HEK293 (cell line): ENCODE measurements at regions of chrX and their contacts with region 1.

Region 1: DNA sequence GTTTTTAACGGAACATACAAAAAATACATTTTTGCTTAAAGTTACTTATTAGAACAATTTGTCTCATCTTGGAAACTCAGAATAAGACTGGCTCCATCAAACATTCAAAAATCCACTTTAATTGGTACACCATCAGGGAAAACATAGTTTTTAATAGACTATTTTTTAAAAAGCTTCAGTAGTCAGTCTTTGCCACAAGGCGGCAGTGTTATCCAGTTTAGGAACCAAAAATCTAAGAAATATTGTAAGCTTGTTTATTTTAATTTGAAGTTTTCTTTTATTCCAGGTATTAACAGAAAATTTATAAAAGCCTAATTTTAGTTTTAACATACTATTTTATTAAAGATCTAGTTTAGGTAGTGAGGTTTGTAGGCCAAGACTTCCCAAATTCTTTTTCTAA is 107.7 kb downstream of the APOOL start:
- H3K4me3 ChIP-seq: no peak overlapping the region
- H3K27ac ChIP-seq: no peak overlapping the region
- H3K4me1 ChIP-seq: no peaks in the 10 kb centered on the region
- CTCF ChIP-seq: no peak

Region 2: GRCh38 chrX:84830836-84831235 is 280.5 kb before region 1 on chrX:
- CTCF ChIA-PET with region 1: no interaction called
- POLR2A ChIA-PET with region 1: no interaction called
- H3K4me3 ChIP-seq: no peak overlapping the region
- H3K27ac ChIP-seq: no peak overlapping the region
- H3K4me1 ChIP-seq: no peaks in the 10 kb centered on the region
- CTCF ChIP-seq: no peak

Region 3: DNA sequence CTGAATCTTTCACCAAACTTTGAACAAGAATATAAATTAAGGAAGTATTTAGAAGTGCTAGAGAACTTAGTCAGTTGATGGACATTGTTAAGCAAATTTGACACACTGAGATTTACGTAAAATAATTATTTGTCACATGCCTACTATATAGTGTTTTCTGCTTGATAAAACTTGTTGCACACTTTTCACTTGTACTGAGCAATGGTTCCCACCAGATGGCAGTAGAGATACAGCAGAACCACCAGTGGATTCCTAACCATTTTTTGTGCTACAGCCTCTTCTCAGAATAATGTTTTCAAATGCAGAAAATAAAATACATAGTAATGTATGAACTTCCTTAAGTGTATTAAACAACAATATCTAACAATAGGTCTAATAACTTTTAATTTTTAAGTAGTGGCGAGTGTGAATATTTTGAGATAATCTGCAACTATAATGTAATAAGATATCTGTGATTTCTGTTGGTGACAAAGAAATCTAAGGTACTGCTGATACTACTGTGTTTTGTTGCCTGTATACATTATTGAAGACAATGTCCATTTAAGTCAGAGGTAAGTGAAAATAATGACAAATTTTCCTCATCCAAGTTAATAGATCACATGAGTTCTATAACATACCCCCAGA is 26.5 kb before region 1 on chrX:
- CTCF ChIA-PET with region 1: interaction called, 39 read pairs
- POLR2A ChIA-PET with region 1: no interaction called
- H3K4me3 ChIP-seq: no peak overlapping the region
- H3K27ac ChIP-seq: no peak overlapping the region
- H3K4me1 ChIP-seq: no peaks in the 10 kb centered on the region
- CTCF ChIP-seq: peak; percentile 69; the same call in 1 of the 2 replicates

Region 4: DNA sequence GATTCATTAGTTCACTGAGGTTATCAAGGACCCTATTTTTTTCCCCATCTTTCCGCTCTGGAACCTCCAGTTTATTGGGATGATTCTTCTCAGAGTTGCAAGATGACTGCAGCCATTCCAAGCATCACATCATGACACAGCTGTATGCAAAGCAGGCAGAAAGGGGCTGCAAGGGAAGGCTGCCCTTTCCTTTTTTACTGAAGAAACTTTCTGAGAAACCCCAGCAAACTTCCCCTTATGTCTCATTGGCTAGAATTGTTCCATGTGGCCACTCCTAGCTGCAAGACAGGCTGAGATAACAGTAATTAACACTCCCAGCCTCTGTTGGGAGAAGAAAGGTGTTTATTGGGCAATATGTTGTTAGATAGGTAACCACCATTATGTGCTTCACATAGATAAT is 29.6 kb after region 1 on chrX:
- CTCF ChIA-PET with region 1: interaction called, 13 read pairs
- POLR2A ChIA-PET with region 1: no interaction called
- H3K4me3 ChIP-seq: no peak overlapping the region
- H3K27ac ChIP-seq: no peak overlapping the region
- H3K4me1 ChIP-seq: no peaks in the 10 kb centered on the region
- CTCF ChIP-seq: no peak

Region 5: DNA sequence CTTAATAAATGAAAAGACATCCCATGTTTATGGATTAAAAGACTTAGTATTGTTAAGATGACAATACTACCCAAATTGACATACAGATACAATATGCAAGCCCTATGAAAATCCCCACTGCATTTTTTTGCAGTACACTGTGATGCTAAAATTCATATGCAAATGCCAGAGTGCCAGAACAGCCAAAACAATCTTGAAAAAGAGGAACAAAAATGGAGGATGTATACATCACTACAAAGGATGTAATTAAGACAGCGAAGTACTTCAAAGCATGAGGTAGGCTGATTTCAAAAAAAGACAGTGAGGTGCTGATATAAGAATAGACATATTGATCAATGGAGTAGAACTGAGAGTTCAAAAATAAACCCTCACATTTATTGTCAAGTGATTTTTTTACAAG is 85.0 kb after region 1 on chrX:
- CTCF ChIA-PET with region 1: no interaction called
- POLR2A ChIA-PET with region 1: no interaction called
- H3K4me3 ChIP-seq: no peak overlapping the region
- H3K27ac ChIP-seq: no peak overlapping the region
- H3K4me1 ChIP-seq: no peaks in the 10 kb centered on the region
- CTCF ChIP-seq: no peak

Region 6: DNA sequence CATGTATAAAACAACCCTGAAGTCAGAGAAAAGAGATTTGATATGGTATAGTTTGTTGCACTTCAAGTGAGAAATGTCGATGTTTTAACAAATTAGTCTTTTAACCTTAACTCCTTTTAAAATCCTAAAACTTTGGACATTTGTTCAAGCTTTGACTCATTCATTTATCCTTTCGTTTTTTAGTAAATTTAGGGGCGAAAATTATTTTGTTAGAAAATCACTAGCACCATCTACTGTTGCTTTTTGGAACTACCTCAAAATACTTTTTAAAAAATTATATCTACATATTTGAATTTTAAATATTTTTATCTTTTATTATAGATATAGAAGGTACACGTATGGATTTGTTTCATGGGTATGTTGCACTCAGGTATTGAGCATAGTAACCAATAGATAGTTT is 433.3 kb after region 1 on chrX:
- CTCF ChIA-PET with region 1: interaction called, 27 read pairs
- POLR2A ChIA-PET with region 1: no interaction called
- H3K4me3 ChIP-seq: no peak overlapping the region
- H3K27ac ChIP-seq: no peak overlapping the region
- H3K4me1 ChIP-seq: no peaks in the 10 kb centered on the region
- CTCF ChIP-seq: no peak